Activated B cell treated with CpG ODN at 0.5 μM for 24 hours (primary cell): ENCODE measurements at regions of chr1 and their contacts with region 1.

Region 1: DNA sequence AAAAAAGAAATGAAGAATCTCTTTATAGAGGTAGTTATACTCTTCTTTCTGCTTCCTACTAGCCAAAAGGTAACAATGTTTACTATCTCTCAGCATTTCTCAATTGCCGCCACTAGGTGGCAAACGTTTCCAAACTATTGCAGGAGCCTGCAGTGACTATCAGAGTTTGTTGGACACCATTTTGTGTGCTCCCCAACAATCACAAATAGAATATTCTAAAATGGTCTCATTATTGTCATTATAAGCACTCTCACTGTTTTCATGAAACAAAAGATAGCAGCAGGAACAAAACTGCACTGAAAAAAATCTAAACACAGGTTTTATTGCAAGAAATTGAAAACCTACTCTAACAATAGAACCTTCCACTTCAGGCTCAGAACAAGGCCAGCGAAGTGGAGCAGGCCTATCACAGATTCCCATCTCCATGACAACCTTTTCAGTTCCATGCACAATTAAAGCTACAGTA is 83.9 kb upstream of the PLPPR4 start:
- DNase-seq: no peak
- ATAC-seq: peak; percentile 81
- H3K4me3 Mint-ChIP-seq: no peak overlapping the region
- H3K27ac Mint-ChIP-seq: no peak overlapping the region
- H3K4me1 Mint-ChIP-seq: no peaks in the 10 kb centered on the region
- H3K27me3 Mint-ChIP-seq: no peaks in the 10 kb centered on the region
- CTCF ChIP-seq: no peak

Region 2: DNA sequence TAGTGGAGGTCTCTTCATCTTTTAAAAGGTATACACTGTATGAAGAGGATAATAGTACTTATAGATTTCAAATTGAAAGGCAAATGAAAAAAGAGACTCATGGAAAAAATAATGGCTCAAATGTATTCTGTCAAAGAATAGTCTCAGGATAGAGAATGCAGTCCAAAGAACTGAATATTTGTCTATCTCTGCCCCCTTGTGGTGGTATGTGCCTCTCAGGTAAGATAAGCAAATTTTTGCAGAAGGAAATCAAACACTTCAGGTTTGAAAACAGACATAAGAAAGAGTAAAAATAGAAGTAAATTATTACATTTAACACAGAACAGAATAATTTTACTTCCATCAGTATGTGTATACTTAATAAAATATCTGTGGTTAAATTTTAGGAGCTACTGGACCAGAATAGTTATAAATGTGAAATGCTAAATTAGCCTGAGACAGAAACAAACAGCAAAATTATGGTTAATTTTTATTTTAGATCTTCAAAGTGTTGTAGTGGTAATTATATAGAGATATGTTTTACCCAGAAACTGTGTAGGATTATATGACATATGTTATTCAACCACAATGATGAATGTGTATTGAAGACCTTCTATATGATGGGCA is 301.1 kb after region 1 on chr1:
- CTCF ChIA-PET with region 1: interaction called, 6 read pairs
- POLR2A ChIA-PET with region 1: no interaction called
- intact Hi-C with region 1: loop called (anchors 1 kb)
- DNase-seq: no peak
- ATAC-seq: no peak
- H3K4me3 Mint-ChIP-seq: no peak overlapping the region
- H3K27ac Mint-ChIP-seq: no peak overlapping the region
- H3K4me1 Mint-ChIP-seq: no peaks in the 10 kb centered on the region
- H3K27me3 Mint-ChIP-seq: no peaks in the 10 kb centered on the region
- CTCF ChIP-seq: peak; percentile 62

Region 3: DNA sequence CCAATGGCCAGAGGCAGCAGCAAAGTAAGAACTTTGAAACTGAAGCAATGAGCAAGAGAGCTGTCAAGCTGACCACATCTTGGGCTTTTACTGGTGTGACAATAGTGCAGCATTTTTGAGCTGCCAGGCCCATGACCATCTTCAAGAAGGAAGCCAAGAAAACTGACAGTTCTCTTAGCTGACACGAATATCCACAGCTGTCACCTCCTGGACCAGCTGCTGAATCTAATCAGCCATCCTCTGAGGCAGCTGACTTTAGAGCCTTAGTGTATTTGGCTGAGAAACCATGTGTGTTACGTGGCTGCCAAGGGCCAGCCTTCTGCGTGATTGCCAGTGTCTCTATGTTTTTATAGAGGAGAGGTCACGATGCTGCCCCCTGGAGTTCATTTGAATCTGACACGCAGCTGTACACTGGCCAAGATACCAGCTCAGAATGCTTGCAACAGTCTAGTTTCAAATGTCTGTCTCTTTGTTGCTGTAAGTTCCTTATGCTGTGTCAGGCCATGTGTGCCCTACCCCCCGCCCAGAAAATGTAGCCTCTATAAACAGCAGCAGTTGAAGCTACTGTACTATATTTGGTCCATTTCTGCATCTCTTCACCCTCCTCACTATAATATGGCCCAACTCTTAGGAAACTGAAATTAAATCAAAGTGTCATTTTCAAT is 505.3 kb after region 1 on chr1:
- CTCF ChIA-PET with region 1: interaction called, 3 read pairs
- POLR2A ChIA-PET with region 1: no interaction called
- intact Hi-C with region 1: loop called (anchors 1 kb)
- DNase-seq: no peak
- ATAC-seq: peak; percentile 45
- H3K4me3 Mint-ChIP-seq: no peak overlapping the region
- H3K27ac Mint-ChIP-seq: no peak overlapping the region
- H3K4me1 Mint-ChIP-seq: no peaks in the 10 kb centered on the region
- H3K27me3 Mint-ChIP-seq: peaks cover 3% of the 10 kb centered on the region
- CTCF ChIP-seq: no peak